ENCODE measurements at regions of chr17 and their contacts with region 1.

Region 1: DNA sequence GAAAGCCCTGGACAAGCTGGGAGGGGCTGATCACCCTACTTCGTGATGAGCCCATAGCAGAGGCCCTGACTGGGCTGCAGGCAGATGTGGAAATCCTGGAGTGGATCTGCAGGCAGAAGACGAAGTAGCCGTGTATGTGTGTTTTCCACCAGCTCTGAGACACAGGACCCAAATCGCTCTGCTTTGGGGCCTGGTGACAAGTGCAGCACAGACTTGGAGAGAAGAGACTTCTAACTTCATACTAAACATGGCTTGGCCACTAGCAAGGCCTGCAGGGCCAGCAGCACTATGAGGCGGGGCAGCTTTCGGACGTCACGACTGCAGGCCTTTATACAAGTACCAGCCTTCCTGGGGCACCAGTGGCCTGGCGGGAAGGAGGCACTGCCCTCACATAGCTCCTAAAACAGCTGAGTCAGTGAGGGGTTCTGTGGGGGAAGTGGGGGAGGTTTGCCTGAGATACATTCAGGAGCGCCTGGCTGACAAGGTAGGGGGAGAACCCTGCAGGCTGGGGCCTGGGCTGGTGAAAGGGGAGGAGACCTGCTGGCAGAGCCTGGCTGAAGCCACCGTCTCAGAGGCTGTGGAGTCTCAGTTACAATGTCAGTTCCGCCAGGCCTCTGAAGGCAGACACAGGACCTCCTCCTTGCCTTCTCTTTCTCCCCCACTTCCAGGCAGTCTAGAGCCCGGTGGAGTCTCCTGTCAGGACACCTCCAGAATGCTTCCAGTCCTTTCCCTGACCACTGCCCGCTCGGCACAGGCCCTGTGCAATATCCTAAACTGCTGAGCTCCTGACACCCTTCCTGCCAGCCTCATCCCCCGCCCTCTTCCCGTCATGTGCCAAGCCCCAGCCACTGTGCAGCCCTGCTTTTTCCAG is 73.4 kb downstream of the WSB1 start:
- DNase-seq: peak; percentile 77 to 94 (median 90)
- H3K4me3 ChIP-seq: peak overlapping the region in 3 of 7 experiments; percentile 11 to 48 (median 26)
- H3K27ac ChIP-seq: peak overlapping the region; percentile 20 to 54
- H3K4me1 ChIP-seq: peaks cover 0 to 28% (median 17%) of the 10 kb centered on the region in 4 experiments
- H3K27me3 ChIP-seq: no peaks in the 10 kb centered on the region

Region 2: DNA sequence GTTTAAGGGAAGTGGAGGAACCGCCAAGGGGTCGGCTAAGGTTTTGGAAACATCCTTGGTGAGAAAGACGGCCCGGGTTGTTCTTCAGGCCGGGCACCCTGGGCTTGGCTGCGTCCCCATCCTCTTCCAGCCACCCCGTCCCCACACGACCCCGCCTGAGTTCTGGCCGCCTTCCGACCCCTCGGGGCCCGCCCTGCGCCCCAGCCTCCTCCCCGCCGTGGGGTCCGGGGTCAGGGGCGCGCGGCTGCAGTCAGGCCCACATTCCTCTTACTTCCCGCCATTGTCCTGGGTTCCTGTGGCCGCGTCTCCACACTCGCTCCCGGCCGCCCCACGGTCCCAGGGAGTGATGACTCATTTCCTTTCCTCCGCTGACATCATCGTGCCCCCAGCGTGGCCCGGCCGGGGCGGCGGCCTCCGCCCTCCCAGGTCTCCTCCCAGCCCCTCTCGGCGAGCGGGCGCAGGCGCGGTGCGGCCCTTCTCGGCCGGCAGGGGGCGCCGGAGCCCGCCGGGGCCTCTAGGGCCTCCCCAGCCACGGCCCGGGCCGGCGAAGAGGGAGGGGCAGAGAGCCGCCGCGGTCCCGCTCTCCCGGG is 13.8 kb before region 1 on chr17:
- CTCF ChIA-PET with region 1: interaction called, 29 read pairs
- POLR2A ChIA-PET with region 1: no interaction called
- DNase-seq: peak; percentile 91 to 94 (median 93)
- H3K4me3 ChIP-seq: peak overlapping the region; percentile 51 to 83 (median 76)
- H3K27ac ChIP-seq: peak overlapping the region; percentile 85 to 96
- H3K4me1 ChIP-seq: peaks cover 0 to 32% (median 21%) of the 10 kb centered on the region in 4 experiments
- H3K27me3 ChIP-seq: no peaks in the 10 kb centered on the region

Region 3: DNA sequence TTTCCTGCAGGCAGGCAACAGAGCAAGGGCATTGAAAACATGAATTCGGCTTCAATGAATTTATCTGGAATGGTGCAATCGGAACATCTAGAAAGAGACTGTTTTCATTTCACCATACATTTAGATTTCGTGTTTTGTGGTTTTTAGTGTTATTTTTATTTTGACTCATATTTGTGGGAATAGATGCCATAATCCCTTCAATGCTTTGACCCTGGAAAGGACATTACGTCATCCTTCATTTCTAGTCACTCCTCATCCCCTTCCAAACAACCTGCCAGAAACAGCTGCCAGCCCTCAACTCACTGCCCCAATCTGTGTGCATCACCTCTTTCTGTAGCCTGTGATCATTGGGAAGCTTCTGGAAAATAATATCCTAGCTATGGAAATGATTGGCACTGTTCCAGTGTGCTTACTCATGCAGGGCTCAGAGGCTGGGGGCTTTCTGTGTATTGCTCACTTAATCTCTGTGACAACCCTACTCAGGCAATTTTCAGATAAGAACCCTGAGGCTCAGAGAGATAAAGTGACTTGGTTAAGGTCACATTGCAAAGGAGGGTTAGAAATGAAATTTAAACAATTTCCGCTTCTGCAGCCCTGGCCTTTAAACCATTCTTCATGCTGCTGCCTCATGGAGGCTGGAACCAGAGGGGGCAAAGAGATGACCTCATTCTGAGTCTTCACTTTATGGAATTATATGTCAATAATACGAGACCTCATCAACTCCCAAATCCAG is 79.4 kb after region 1 on chr17:
- CTCF ChIA-PET with region 1: no interaction called
- POLR2A ChIA-PET with region 1: no interaction called
- DNase-seq: no peak
- H3K4me3 ChIP-seq: no peak overlapping the region
- H3K27ac ChIP-seq: no peak overlapping the region
- H3K4me1 ChIP-seq: peaks cover 0 to 3% (median 0%) of the 10 kb centered on the region in 4 experiments
- H3K27me3 ChIP-seq: no peaks in the 10 kb centered on the region

Region 4: GRCh38 chr17:27506348-27507231 is 139.2 kb after region 1 on chr17:
- CTCF ChIA-PET with region 1: no interaction called
- POLR2A ChIA-PET with region 1: no interaction called
- DNase-seq: peak in 2 of 3 donors; percentile 54 to 57
- H3K4me3 ChIP-seq: no peak overlapping the region
- H3K27ac ChIP-seq: no peak overlapping the region
- H3K4me1 ChIP-seq: peaks cover 0 to 15% (median 9%) of the 10 kb centered on the region in 4 experiments
- H3K27me3 ChIP-seq: no peaks in the 10 kb centered on the region